ENCODE measurements at regions of chr20 and their contacts with region 1.

Region 1: GRCh38 chr20:23889775-23890211 is 10.2 kb upstream of the CST5 start:
- DNase-seq: peak; percentile 76
- ATAC-seq: peak; percentile 93
- H3K4me3 Mint-ChIP-seq: no peak overlapping the region
- H3K27ac Mint-ChIP-seq: no peak overlapping the region
- H3K4me1 Mint-ChIP-seq: no peaks in the 10 kb centered on the region
- H3K27me3 Mint-ChIP-seq: no peaks in the 10 kb centered on the region
- CTCF ChIP-seq: peak; percentile 68

Region 2: GRCh38 chr20:23596579-23597250 is 293.1 kb before region 1 on chr20:
- CTCF ChIA-PET with region 1: no interaction called
- POLR2A ChIA-PET with region 1: no interaction called
- intact Hi-C with region 1: no loop called
- DNase-seq: no peak
- ATAC-seq: no peak
- H3K4me3 Mint-ChIP-seq: no peak overlapping the region
- H3K27ac Mint-ChIP-seq: no peak overlapping the region
- H3K4me1 Mint-ChIP-seq: no peaks in the 10 kb centered on the region
- H3K27me3 Mint-ChIP-seq: no peaks in the 10 kb centered on the region
- CTCF ChIP-seq: no peak

Region 3: GRCh38 chr20:23995905-23996666 is 106.3 kb after region 1 on chr20:
- CTCF ChIA-PET with region 1: interaction called, 3 read pairs
- POLR2A ChIA-PET with region 1: no interaction called
- intact Hi-C with region 1: loop called (anchors 10 kb)
- DNase-seq: peak; percentile 74
- ATAC-seq: no peak
- H3K4me3 Mint-ChIP-seq: no peak overlapping the region
- H3K27ac Mint-ChIP-seq: no peak overlapping the region
- H3K4me1 Mint-ChIP-seq: no peaks in the 10 kb centered on the region
- H3K27me3 Mint-ChIP-seq: no peaks in the 10 kb centered on the region
- CTCF ChIP-seq: peak; percentile 95

Measured in activated CD8-positive, alpha-beta T cell treated with anti-CD3 and anti-CD28 coated beads for 36 hours (primary cell).